ENCODE measurements at regions of chr1 and their contacts with region 1.

Region 1: DNA sequence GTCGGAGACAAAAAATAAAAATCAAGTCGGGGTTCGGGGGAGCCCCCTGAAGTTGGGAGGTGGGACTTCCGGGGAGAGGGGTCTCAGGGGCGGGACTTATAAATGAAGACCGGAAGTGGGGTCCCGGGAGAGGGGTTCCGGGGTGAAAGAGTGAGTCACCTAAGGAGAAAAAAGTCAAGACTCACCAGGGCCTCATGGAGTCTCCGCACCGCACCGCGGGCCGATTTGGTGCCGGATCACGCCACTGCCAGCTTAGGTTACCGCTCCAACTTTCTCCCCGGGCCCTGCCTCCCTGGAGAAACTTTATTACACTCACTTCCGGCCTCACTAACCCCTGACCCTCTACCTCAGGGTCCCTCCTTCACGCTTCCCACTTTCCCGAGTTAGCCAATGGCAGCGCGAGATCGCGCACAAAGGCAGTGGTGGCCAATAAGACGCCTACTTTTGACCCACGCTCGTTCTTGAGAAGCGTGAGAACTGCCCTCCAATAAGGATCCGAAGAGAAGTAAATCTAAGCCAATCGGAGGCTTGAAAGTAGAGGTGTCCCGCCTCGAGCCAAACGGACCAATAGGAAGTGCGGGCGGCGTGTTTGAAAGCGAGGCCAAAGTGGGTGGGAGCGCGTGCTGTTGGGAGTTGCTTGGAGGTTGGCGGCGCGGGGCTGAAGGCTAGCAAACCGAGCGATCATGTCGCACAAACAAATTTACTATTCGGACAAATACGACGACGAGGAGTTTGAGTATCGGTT is at the start of gene CKS1B:
- DNase-seq: peak; percentile 99
- ATAC-seq: peak; percentile 87
- H3K4me3 Mint-ChIP-seq: no peak within 1 kb of the TSS
- H3K27ac Mint-ChIP-seq: no peak within 1 kb of the TSS
- H3K4me1 Mint-ChIP-seq: peaks cover 30% of the 10 kb centered on the region
- H3K27me3 Mint-ChIP-seq: no peaks in the 10 kb centered on the region
- CTCF ChIP-seq: no peak
- total RNA-seq, gene CKS1B: 172 to 173 TPM

Region 2: GRCh38 chr1:154682254-154682653 is 292.0 kb before region 1 on chr1:
- CTCF ChIA-PET with region 1: no interaction called
- POLR2A ChIA-PET with region 1: no interaction called
- intact Hi-C with region 1: no loop called
- DNase-seq: no peak
- ATAC-seq: no peak
- H3K4me3 Mint-ChIP-seq: no peak overlapping the region
- H3K27ac Mint-ChIP-seq: no peak overlapping the region
- H3K4me1 Mint-ChIP-seq: no peaks in the 10 kb centered on the region
- H3K27me3 Mint-ChIP-seq: no peaks in the 10 kb centered on the region
- CTCF ChIP-seq: no peak

Region 3: DNA sequence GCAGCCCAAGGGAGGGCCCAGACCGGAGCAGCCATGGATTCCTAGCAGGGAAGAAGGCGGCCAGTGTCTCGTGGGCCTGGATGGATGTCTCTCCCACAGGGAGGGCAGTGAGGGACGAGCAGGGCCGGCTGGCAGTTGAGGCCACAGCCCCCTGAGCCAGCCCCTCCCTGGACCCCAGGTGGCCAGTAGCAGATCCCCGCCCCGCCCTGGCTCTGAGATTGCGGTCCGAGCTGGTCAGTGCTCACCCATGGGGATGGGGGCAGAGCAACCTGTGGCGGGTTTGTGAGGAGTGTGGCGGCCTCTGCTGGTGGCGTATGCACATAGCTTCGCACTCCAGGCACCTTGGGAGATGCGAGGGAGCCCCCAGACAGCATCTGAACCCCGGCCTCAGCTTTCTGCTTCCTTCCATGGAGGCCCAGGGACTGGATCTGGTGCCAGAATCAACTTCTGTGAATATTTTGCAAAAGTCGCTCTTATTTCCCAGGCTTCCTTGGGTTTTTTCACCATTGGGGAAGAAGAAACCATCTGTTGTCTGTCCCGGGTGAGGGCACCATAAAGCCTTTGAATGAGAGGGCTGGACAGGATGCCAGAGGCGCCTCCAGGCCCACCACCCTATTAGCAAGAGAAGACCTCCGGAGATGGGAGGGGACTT is 95.7 kb before region 1 on chr1:
- CTCF ChIA-PET with region 1: no interaction called
- POLR2A ChIA-PET with region 1: no interaction called
- intact Hi-C with region 1: no loop called
- DNase-seq: peak; percentile 84
- ATAC-seq: peak; percentile 99
- H3K4me3 Mint-ChIP-seq: no peak overlapping the region
- H3K27ac Mint-ChIP-seq: no peak overlapping the region
- H3K4me1 Mint-ChIP-seq: peaks cover 4% of the 10 kb centered on the region
- H3K27me3 Mint-ChIP-seq: peaks cover 1% of the 10 kb centered on the region
- CTCF ChIP-seq: peak; percentile 84

Region 4: DNA sequence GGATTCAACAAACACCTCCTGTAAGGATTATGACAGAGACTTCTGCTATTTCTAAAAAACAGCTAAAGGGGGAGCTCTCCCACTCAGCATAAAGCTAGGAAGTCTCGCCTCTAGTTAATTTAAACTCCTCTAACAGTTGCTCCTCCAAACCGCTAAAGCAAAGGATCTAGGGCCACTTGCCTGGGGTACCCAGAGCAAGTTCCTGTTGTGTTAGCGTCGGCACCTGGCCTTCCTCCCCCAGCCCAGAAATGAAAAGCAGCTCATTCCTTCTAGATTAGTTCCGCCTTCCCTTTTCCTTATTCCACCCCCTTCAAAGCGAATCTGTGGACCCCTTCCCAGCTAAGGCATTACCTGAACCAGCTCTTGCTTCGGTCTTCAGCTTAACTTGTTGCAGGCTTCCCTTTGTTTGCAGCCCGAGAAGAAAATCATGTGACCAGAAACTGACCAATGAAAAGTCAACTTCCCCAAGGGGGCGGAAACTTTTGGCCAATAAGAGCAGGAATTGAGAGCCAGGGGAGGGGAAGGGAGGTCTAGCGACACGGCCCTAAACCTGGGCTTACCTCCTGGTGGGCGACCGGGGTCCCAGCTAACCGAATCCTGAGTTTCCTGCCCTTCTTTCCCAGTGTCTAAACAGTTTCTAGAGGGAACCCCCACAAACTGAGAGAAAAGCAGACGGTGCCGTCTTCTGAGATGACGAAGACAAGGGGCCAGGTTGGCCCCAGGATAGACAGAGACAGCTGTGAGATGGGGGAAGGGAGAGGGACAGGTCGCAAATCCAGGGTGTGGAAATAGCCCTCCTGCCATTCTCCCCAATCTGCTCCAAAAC is 18.3 kb before region 1 on chr1 and contains the start of gene PBXIP1:
- CTCF ChIA-PET with region 1: interaction called, 30 read pairs
- POLR2A ChIA-PET with region 1: interaction called, 55 read pairs
- intact Hi-C with region 1: no loop called
- DNase-seq: peak; percentile 86
- ATAC-seq: peak; percentile 49
- H3K4me3 Mint-ChIP-seq: peak within 1 kb of the TSS; percentile 91
- H3K27ac Mint-ChIP-seq: peak within 1 kb of the TSS; percentile 97
- H3K4me1 Mint-ChIP-seq: peaks cover 69% of the 10 kb centered on the region
- H3K27me3 Mint-ChIP-seq: no peaks in the 10 kb centered on the region
- CTCF ChIP-seq: peak; percentile 26
- total RNA-seq, gene PBXIP1: 17.7 to 19.4 TPM

Region 5: DNA sequence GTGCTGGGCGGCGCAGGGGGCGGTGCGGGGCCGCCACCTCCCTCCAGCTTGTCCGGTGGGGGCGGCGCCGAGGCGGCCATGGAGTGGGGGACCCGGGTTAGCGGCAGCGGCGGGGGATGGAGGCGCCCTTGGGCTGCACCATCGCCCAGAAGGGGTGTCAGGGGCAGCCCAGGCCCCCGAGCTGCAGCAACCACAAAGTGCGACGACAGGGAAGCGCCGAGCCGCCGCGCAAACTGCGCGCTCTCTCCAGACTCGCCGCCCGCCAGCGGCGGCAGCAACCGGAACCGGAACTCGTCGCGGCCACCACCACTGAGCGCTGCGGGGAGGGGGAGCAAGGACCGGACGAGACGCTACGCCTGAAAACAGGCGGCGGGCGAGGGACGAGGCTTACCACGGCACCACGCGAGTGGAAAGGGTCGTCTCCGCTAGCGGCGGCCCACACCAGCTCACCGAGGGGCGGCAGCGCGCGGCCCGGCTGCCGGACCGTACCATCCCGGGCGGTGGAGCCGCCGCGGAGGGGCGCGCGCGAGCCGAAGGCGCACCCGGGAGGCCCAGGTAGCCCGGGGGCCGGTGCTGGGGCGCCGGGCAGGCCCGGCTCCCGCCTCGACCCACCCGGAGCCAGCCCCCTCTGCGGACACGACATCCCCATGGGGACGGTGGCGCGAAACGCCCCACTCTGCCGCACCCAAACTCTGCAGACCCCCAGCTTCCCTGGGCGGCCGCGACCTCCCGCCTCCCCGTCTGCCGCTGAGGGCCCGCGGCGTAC is 12.6 kb before region 1 on chr1 and contains the start of gene PYGO2:
- CTCF ChIA-PET with region 1: interaction called, 30 read pairs
- POLR2A ChIA-PET with region 1: interaction called, 55 read pairs
- intact Hi-C with region 1: no loop called
- DNase-seq: peak; percentile 87
- ATAC-seq: peak; percentile 86
- H3K4me3 Mint-ChIP-seq: peak within 1 kb of the TSS; percentile 98
- H3K27ac Mint-ChIP-seq: peak within 1 kb of the TSS; percentile 94
- H3K4me1 Mint-ChIP-seq: peaks cover 33% of the 10 kb centered on the region
- H3K27me3 Mint-ChIP-seq: no peaks in the 10 kb centered on the region
- CTCF ChIP-seq: peak; percentile 56
- total RNA-seq, gene PYGO2: 21.2 to 21.8 TPM

Region 6: DNA sequence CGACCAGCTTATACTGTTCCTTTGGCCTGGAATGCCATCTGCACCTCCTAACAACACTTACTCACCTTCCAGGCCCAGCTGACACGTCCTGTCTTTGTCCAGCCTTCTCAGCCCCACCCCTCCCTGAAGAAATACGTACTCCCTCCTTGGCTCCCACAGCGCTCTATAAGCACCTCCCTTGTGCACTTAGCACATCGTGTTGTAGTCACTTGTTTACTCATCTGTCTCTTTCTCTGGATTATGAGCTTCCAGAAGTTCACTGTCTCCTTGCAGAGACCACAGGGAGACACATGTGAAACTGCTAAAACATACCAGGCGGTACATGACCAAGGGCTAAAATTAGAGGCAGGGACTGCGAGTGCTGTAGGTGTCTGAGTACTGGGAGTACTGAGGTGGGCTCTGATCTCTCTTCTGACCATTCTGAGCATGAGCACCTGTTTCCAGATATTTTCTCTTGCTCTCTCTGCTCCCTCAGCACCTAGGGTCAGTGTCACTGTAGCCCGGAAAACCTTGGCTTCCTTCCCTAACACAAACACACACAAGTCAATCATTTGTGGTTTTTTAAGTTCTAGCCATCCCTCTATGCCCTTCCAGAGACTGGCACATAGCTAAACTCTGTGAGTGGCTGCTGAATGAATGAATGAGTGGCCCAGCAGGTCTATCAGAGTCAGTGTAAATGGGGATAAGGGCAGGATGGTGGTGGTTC is 64.5 kb after region 1 on chr1:
- CTCF ChIA-PET with region 1: no interaction called
- POLR2A ChIA-PET with region 1: no interaction called
- intact Hi-C with region 1: no loop called
- DNase-seq: no peak
- ATAC-seq: no peak
- H3K4me3 Mint-ChIP-seq: no peak overlapping the region
- H3K27ac Mint-ChIP-seq: no peak overlapping the region
- H3K4me1 Mint-ChIP-seq: no peaks in the 10 kb centered on the region
- H3K27me3 Mint-ChIP-seq: peaks cover 5% of the 10 kb centered on the region
- CTCF ChIP-seq: no peak

Region 7: DNA sequence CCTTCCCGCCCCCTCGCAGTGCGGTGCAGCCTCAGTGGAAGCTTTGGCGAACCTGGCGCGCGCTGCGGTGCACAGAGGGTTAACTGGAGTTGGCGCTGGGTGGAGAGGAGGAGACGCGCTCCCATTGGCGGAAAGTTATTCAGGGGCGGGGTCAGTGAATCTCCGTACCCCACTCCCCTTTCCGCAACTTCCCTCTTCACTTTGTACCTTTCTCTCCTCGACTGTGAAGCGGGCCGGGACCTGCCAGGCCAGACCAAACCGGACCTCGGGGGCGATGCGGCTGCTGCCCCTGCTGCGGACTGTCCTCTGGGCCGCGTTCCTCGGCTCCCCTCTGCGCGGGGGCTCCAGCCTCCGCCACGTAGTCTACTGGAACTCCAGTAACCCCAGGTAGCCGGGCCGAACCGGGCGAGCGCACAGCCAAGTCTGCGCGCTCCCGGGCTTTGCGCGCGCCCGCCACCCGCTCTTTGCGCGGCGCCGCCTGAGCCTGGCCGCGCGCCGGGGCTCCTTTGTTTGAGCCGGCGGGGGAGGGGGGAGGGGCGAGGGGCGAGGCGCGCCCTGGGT is 89.4 kb after region 1 on chr1 and contains the start of gene EFNA4:
- CTCF ChIA-PET with region 1: interaction called, 3 read pairs
- POLR2A ChIA-PET with region 1: no interaction called
- intact Hi-C with region 1: loop called (anchors 5 kb)
- DNase-seq: peak; percentile 88
- ATAC-seq: peak; percentile 80
- H3K4me3 Mint-ChIP-seq: peak within 1 kb of the TSS; percentile 77
- H3K27ac Mint-ChIP-seq: peak within 1 kb of the TSS; percentile 39
- H3K4me1 Mint-ChIP-seq: peaks cover 32% of the 10 kb centered on the region
- H3K27me3 Mint-ChIP-seq: no peaks in the 10 kb centered on the region
- CTCF ChIP-seq: no peak
- total RNA-seq, gene EFNA4: 7.1 to 7.8 TPM

Region 8: DNA sequence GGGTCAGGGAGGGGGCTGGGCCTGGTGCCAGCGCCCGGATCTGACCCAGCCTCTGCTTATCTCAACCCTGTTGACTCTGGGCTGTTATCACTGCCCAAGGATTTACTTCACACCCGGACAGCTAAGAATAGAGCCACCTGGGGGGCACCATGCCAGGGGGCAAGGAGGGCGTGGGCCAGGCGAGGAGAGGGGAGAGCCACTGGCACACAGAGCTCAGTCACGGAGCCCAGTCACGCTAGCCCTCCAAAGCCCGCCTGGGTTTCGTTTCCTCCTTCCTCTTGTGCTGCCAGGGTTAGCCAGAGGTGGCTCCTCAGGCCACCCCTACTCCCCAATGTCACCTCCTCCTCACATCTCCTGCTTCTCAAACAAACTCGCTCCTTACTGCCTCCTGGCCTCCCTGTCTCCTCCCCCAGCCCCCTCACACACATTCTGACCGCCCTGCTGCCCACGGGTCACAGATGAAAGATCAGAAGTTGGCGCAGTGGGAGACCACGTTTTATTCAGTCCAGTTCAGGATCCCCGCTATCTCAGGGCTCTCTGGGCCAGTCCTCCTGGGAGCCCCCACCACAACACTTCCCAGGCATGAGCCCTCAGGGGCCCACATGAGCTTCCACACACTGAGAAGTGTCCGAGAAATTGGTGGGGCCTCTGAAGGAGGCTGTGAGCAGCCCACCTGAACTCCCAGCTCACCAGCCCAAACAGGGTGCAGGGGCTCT is 211.3 kb after region 1 on chr1:
- CTCF ChIA-PET with region 1: no interaction called
- POLR2A ChIA-PET with region 1: no interaction called
- intact Hi-C with region 1: no loop called
- DNase-seq: no peak
- ATAC-seq: no peak
- H3K4me3 Mint-ChIP-seq: no peak overlapping the region
- H3K27ac Mint-ChIP-seq: peak overlapping the region; percentile 61
- H3K4me1 Mint-ChIP-seq: no peaks in the 10 kb centered on the region
- H3K27me3 Mint-ChIP-seq: no peaks in the 10 kb centered on the region
- CTCF ChIP-seq: no peak